Activated CD4-positive, alpha-beta T cell treated with anti-CD3 and anti-CD28 coated beads for 36 hours (primary cell): ENCODE measurements at regions of chr6 and their contacts with region 1.

Region 1: DNA sequence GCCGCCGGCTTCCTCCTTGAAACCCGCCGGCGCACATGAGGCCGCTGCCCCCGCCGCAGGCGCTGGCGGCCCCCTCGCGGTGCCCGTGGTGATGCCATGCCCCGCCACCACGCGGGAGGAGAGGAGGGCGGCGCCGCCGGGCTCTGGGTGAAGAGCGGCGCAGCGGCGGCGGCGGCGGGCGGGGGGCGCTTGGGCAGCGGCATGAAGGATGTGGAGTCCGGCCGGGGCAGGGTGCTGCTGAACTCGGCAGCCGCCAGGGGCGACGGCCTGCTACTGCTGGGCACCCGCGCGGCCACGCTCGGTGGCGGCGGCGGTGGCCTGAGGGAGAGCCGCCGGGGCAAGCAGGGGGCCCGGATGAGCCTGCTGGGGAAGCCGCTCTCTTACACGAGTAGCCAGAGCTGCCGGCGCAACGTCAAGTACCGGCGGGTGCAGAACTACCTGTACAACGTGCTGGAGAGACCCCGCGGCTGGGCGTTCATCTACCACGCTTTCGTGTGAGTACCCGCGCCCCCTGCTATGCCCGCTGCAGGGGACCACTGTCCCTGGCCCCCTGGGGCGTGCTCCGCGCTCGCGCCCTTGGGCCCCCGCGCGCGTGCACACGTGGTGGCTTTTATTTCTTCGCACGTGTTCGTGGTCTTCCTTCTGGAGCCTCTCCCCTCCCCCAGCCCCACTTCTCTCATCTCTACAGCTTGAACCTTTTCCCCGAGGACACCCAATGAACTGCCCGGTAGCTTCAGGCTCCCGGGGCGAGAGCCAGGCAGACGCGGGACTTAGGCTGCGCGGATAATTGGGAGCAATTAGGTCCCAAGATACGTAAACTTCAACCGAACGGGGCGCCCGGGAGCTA is 453 bp downstream of the KCNQ5 start:
- DNase-seq: peak; percentile 69
- ATAC-seq: peak; percentile 13
- H3K4me3 Mint-ChIP-seq: peak overlapping the region; percentile 81
- H3K27ac Mint-ChIP-seq: peak overlapping the region; percentile 90
- H3K4me1 Mint-ChIP-seq: peaks cover 58% of the 10 kb centered on the region
- H3K27me3 Mint-ChIP-seq: peaks cover 17% of the 10 kb centered on the region

Region 2: DNA sequence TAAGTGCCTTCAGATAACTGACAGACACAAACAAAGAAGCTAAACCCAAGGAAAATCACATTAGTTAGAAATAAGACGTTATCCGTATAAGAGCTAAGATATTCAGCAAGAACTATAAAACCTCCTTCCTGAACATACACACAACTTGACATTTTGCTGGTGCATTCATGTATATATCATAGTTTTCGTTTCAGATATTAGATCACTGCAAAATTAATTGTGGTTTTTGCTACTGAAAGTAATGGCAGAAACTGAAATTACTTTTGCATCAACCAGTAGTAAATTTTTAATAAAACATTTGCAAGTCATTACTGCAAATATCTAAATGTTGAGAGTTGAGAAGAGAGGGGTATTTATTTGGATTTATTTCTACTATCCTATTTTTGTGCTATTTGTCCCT is 26.5 kb before region 1 on chr6:
- CTCF ChIA-PET with region 1: no interaction called
- POLR2A ChIA-PET with region 1: no interaction called
- intact Hi-C with region 1: no loop called
- DNase-seq: no peak
- ATAC-seq: no peak
- H3K4me3 Mint-ChIP-seq: no peak overlapping the region
- H3K27ac Mint-ChIP-seq: no peak overlapping the region
- H3K4me1 Mint-ChIP-seq: no peaks in the 10 kb centered on the region
- H3K27me3 Mint-ChIP-seq: peaks cover 11% of the 10 kb centered on the region

Region 3: GRCh38 chr6:72649032-72649984 is 27.0 kb after region 1 on chr6:
- CTCF ChIA-PET with region 1: interaction called, 8 read pairs
- POLR2A ChIA-PET with region 1: interaction called, 3 read pairs
- intact Hi-C with region 1: loop called (anchors 1 to 2 kb)
- DNase-seq: peak; percentile 38
- ATAC-seq: peak; percentile 82
- H3K4me3 Mint-ChIP-seq: no peak overlapping the region
- H3K27ac Mint-ChIP-seq: peak overlapping the region; percentile 55
- H3K4me1 Mint-ChIP-seq: peaks cover 23% of the 10 kb centered on the region
- H3K27me3 Mint-ChIP-seq: no peaks in the 10 kb centered on the region

Region 4: DNA sequence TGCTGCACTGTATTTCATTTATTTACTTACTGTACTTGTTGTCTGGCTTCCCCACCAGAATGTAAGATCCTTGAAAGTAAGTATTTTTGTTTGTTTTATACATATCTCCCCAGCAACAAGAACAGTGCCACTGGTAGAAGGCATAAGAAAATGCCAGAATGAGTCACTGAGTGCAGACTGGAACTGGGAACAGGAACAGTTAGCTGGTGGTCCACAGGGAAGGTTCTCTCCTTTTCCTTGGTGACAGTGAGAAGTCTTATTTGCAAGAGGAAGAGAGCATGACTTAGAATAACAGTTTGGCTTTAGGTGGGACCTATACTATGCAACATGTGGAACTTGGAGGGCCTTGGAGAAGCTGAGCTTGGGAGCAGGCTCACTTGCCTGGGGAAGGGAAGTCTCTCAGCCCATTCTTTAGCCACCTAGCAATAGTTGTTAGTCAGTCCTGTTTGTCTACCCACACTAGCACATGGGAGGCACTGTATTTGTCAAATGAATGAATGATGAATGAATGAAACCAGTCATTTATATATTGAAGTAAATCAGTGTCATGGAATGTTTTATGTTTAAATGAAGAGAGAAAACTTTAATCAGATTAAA is 203.1 kb after region 1 on chr6:
- CTCF ChIA-PET with region 1: no interaction called
- POLR2A ChIA-PET with region 1: no interaction called
- intact Hi-C with region 1: loop called in 1 of 2 experiments (anchors 5 kb)
- DNase-seq: no peak
- ATAC-seq: peak; percentile 25
- H3K4me3 Mint-ChIP-seq: no peak overlapping the region
- H3K27ac Mint-ChIP-seq: peak overlapping the region; percentile 55
- H3K4me1 Mint-ChIP-seq: peaks cover 23% of the 10 kb centered on the region
- H3K27me3 Mint-ChIP-seq: no peaks in the 10 kb centered on the region

Region 5: DNA sequence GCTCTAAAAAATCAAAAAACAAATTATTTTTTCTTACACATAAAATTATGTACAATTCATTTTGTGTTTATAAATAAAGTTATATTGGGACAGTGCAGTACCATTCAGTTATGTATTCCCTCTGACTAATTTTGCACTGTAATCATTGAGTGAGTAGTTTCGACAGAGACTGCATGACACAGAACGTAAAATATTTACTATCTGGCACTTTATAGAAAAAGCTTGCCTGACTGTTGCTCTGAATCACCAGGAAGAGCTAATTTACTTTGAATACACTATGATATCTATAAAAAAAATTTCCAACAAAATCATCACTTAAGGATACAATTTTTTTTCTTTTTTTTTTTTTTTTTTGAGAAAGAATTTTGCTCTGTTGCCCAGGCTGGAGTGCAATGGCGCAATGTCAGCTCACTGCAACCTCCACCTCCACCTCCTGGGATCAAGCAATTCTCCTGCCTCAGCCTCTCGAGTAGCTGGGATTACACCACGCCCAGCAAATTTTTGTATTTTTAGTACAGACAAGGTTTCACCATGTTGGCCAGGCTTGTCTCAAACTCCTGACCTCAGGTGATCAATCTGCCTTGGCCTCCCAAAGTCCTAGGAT is 613.9 kb after region 1 on chr6:
- CTCF ChIA-PET with region 1: no interaction called
- POLR2A ChIA-PET with region 1: no interaction called
- intact Hi-C with region 1: no loop called
- DNase-seq: no peak
- ATAC-seq: no peak
- H3K4me3 Mint-ChIP-seq: no peak overlapping the region
- H3K27ac Mint-ChIP-seq: no peak overlapping the region
- H3K4me1 Mint-ChIP-seq: no peaks in the 10 kb centered on the region
- H3K27me3 Mint-ChIP-seq: no peaks in the 10 kb centered on the region

Region 6: DNA sequence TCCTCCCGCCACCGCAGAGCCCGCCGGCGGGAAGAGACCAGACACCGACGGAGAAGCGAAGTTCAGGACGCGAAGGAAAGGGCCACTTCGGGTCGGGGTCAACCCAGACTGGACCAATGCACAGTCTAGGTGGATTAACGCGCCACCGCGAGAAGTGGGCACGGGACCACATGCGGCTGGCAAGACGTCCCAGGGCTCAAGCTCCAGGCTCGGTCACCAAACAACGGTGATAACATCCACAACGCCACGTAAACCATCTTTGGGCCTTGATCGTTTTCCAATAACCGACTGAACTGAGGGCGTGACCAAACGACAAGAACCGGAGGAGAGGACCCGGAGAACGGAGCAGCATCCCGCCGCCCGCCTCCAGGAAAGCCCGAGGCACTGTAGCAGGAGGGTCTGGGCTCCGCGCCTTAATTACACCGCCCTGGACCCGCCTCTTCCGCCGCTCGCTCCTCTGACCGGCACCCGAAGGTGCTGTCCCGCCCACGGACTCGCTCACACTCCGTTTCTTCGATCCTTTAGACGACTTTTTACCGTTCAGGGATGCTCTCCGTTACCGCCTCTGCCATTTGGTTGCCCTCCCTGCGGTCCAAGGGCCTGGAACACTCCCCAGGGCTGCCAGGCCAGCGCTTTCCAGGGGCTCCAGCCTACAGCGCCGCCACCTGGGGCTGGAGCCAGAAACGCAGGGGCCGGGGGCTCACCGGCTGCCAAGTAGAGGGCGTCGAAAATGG is 687.6 kb after region 1 on chr6:
- CTCF ChIA-PET with region 1: no interaction called
- POLR2A ChIA-PET with region 1: no interaction called
- intact Hi-C with region 1: loop called in 1 of 2 experiments (anchors 5 kb)
- DNase-seq: peak; percentile 79
- ATAC-seq: peak; percentile 90
- H3K4me3 Mint-ChIP-seq: peak overlapping the region; percentile 90
- H3K27ac Mint-ChIP-seq: peak overlapping the region; percentile 88
- H3K4me1 Mint-ChIP-seq: peaks cover 20% of the 10 kb centered on the region
- H3K27me3 Mint-ChIP-seq: peaks cover 28% of the 10 kb centered on the region

Region 7: DNA sequence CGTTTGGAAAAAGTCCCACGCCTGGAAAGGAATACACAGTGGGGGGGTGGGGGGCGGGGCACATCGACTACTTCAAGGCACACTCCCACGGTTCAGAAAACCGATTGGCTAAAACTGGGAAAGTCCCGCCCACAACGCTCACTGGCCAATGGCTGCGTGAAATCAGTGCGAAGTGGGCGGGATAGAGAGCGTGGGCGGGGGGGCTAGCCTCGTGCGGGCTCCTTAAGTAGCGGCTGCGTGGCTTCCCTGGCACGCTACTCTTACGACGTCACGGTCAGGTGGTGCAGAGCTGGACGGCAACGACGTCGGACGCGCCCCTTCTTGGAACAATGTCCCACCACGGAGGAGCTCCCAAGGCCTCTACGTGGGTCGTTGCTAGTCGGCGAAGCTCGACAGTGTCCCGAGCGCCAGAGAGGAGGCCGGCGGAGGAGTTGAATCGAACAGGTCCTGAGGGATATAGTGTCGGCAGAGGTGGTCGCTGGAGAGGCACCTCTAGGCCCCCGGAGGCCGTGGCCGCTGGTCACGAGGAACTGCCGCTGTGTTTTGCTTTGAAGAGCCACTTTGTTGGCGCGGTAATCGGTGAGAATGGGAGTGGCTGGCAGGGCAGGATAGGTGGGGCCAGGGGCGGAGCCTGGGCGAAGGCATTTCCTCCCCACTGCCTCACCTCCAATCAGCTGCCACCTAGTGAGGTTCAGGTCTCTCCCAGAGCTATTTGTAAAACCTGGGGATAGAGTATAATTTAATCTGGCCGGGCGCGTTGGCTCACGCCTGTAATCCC is 772.4 kb after region 1 on chr6 and contains the start of gene DDX43:
- CTCF ChIA-PET with region 1: no interaction called
- POLR2A ChIA-PET with region 1: no interaction called
- intact Hi-C with region 1: loop called in 1 of 2 experiments (anchors 5 kb)
- DNase-seq: peak; percentile 78
- ATAC-seq: peak; percentile 94
- H3K4me3 Mint-ChIP-seq: peak within 1 kb of the TSS; percentile 76
- H3K27ac Mint-ChIP-seq: peak within 1 kb of the TSS; percentile 92
- H3K4me1 Mint-ChIP-seq: peaks cover 12% of the 10 kb centered on the region
- H3K27me3 Mint-ChIP-seq: no peaks in the 10 kb centered on the region
- total RNA-seq, gene DDX43: 0.51 to 0.66 TPM

Region 8: DNA sequence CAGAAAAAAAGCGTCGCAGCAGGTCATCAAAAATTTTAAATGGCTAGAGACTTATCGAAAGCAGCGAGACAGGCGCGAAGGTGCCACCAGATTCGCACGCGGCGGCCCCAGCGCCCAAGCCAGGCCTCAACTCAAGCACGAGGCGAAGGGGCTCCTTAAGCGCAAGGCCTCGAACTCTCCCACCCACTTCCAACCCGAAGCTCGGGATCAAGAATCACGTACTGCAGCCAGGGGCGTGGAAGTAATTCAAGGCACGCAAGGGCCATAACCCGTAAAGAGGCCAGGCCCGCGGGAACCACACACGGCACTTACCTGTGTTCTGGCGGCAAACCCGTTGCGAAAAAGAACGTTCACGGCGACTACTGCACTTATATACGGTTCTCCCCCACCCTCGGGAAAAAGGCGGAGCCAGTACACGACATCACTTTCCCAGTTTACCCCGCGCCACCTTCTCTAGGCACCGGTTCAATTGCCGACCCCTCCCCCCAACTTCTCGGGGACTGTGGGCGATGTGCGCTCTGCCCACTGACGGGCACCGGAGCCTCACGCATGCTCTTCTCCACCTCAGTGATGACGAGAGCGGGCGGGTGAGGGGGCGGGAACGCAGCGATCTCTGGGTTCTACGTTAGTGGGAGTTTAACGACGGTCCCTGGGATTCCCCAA is 898.5 kb after region 1 on chr6 and contains the start of gene EEF1A1:
- CTCF ChIA-PET with region 1: no interaction called
- POLR2A ChIA-PET with region 1: no interaction called
- intact Hi-C with region 1: loop called in 1 of 2 experiments (anchors 5 kb)
- DNase-seq: peak; percentile 100
- ATAC-seq: peak; percentile 80
- H3K4me3 Mint-ChIP-seq: peak within 1 kb of the TSS; percentile 97
- H3K27ac Mint-ChIP-seq: peak within 1 kb of the TSS; percentile 98
- H3K4me1 Mint-ChIP-seq: peaks cover 25% of the 10 kb centered on the region
- H3K27me3 Mint-ChIP-seq: no peaks in the 10 kb centered on the region
- total RNA-seq, gene EEF1A1: 11,209 to 15,482 TPM